K562 (cell line): ENCODE measurements at regions of chr1 and their contacts with region 1.

Region 1: GRCh38 chr1:153071511-153071910 is at the start of gene SPRR2B:
- DNase-seq: no peak
- ATAC-seq: no peak
- H3K4me3 ChIP-seq: no peak within 1 kb of the TSS
- H3K27ac ChIP-seq: no peak within 1 kb of the TSS
- H3K4me1 ChIP-seq: peaks cover 5 to 17% of the 10 kb centered on the region in 2 experiments
- H3K27me3 ChIP-seq: no peaks in the 10 kb centered on the region
- CTCF ChIP-seq: no peak
- EP300 ChIP-seq: no peak
- POLR2A ChIP-seq: no peak
- RAD21 ChIP-seq: no peak
- polyA plus RNA-seq, gene SPRR2B: not detected

Region 2: DNA sequence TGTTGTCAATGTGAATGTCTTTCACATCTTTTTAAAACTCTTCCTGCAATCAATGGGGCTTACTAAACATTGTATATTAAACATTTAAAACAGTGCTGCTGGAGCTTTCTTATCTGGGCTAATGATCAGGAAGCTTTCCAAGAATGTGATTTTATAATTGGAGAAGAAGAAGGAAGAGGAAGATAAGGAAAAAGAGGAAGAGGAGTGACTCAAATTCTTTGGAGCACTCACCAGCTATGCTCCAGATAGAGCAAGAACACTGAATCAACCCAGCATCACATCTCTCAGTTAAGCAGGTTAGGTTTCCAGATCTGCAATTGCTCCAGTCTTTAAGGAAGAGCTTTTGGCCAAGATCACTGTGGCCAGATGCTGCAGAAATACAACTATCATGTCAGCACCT is 24.3 kb after region 1 on chr1:
- CTCF ChIA-PET with region 1: no interaction called
- POLR2A ChIA-PET with region 1: no interaction called
- in situ Hi-C with region 1: no loop called
- intact Hi-C with region 1: loop called (anchors 1 kb)
- DNase-seq: no peak
- ATAC-seq: no peak
- H3K4me3 ChIP-seq: no peak overlapping the region
- H3K27ac ChIP-seq: no peak overlapping the region
- H3K4me1 ChIP-seq: no peaks in the 10 kb centered on the region; a peak in 1 of 5 replicates
- H3K27me3 ChIP-seq: no peaks in the 10 kb centered on the region
- CTCF ChIP-seq: no peak
- EP300 ChIP-seq: no peak
- POLR2A ChIP-seq: no peak
- RAD21 ChIP-seq: no peak